Endothelial cell of umbilical vein (primary cell): ENCODE measurements at regions of chr2 and their contacts with region 1.

Region 1: DNA sequence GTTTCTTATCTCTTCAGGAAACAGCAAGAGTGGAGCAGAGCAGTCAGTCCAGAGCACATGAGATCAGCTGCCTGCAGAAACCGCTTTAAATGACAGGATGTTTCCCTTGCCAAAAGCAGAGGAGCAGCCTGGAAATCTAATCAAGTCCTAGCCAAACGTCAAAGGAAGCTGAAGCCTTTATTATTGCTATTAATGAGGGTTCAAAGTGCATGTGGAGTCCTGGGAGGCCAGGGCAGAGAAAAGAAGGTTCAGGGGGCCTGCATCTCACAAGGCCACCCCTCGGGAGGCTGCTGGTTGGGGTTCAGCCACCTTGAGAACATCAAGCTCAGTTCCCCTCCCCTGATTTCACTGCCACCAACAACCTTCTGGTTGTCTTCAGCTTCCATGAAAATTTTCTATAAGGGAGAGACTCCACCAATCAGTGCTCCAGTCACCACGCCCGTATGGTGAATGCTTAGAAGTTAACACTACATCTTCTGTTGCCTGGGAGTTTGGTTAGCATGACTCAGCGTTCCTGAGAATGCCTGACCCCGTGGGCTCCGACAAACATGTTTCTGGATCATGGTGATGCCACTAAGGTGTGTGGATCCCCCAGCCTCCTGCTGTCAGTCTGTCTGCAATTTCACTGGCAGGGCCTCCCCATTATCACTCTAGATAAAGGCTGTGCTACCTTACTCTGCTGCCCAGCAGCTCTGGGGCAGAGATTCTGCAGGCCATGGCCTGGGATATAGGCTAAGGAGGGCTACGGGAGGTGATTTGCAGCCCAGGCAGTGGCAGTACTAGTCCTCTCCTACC is 66.2 kb downstream of the STPG4 start:
- DNase-seq: peak; percentile 95
- H3K4me3 ChIP-seq: no peak overlapping the region
- H3K27ac ChIP-seq: peak overlapping the region; percentile 93
- H3K4me1 ChIP-seq: peaks cover 52% of the 10 kb centered on the region
- H3K27me3 ChIP-seq: no peaks in the 10 kb centered on the region
- CTCF ChIP-seq: no peak
- POLR2A ChIP-seq: peak; percentile 31

Region 2: GRCh38 chr2:47043142-47043890 is 45.5 kb before region 1 on chr2:
- CTCF ChIA-PET with region 1: interaction called, 12 read pairs
- POLR2A ChIA-PET with region 1: no interaction called
- dilution Hi-C with region 1: no loop called
- intact Hi-C with region 1: loop called (anchors 2 kb)
- DNase-seq: peak; percentile 82
- H3K4me3 ChIP-seq: no peak overlapping the region
- H3K27ac ChIP-seq: peak overlapping the region; percentile 97
- H3K4me1 ChIP-seq: peaks cover 28% of the 10 kb centered on the region
- H3K27me3 ChIP-seq: no peaks in the 10 kb centered on the region
- CTCF ChIP-seq: no peak
- POLR2A ChIP-seq: no peak

Region 3: DNA sequence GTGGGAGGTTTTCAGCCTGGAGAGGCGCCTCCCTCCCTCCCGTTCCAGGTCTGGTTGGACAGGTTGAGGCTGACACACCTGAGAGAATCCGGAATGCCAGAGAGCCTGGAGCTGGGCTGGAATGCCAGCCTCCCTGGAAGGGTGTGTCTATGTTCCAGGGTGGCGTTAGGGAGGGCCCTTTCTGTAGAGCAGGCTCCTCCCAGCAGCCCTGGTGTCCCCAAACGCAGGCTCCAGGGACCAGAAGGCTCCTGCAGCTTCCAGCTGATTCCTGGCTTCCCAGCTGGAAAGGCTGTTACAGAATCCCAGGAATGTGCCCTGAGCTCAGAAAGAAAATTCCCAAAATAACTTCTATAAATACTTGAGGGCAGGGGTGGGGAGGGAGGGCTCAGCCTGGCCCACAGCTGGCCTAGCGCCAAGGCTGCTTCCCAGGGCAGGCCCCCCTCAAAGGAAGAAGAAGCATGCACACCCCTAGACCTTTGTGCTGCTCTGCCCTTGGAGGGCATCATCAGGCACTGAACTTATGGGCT is 19.2 kb before region 1 on chr2:
- CTCF ChIA-PET with region 1: interaction called, 10 read pairs
- POLR2A ChIA-PET with region 1: interaction called, 3 read pairs
- dilution Hi-C with region 1: no loop called
- intact Hi-C with region 1: loop called (anchors 1 kb)
- DNase-seq: peak; percentile 34
- H3K4me3 ChIP-seq: no peak overlapping the region
- H3K27ac ChIP-seq: peak overlapping the region; percentile 48
- H3K4me1 ChIP-seq: peaks cover 46% of the 10 kb centered on the region
- H3K27me3 ChIP-seq: no peaks in the 10 kb centered on the region
- CTCF ChIP-seq: no peak
- POLR2A ChIP-seq: no peak

Region 4: GRCh38 chr2:47076586-47077441 is 12.1 kb before region 1 on chr2:
- CTCF ChIA-PET with region 1: interaction called, 12 read pairs
- POLR2A ChIA-PET with region 1: interaction called, 4 read pairs
- dilution Hi-C with region 1: no loop called
- intact Hi-C with region 1: loop called (anchors 1 kb)
- DNase-seq: peak; percentile 76
- H3K4me3 ChIP-seq: no peak overlapping the region
- H3K27ac ChIP-seq: peak overlapping the region; percentile 89
- H3K4me1 ChIP-seq: peaks cover 26% of the 10 kb centered on the region
- H3K27me3 ChIP-seq: no peaks in the 10 kb centered on the region
- CTCF ChIP-seq: no peak
- POLR2A ChIP-seq: no peak

Region 5: GRCh38 chr2:47174733-47175361 is 86.0 kb after region 1 on chr2:
- CTCF ChIA-PET with region 1: interaction called, 3 read pairs
- POLR2A ChIA-PET with region 1: no interaction called
- dilution Hi-C with region 1: no loop called
- intact Hi-C with region 1: loop called (anchors 5 kb)
- DNase-seq: peak; percentile 56
- H3K4me3 ChIP-seq: peak overlapping the region; percentile 68 to 91 (median 90)
- H3K27ac ChIP-seq: peak overlapping the region; percentile 100
- H3K4me1 ChIP-seq: peaks cover 41% of the 10 kb centered on the region
- H3K27me3 ChIP-seq: no peaks in the 10 kb centered on the region
- CTCF ChIP-seq: no peak
- POLR2A ChIP-seq: peak; percentile 22

Region 6: GRCh38 chr2:47272031-47272864 is 183.4 kb after region 1 on chr2:
- CTCF ChIA-PET with region 1: interaction called, 4 read pairs
- POLR2A ChIA-PET with region 1: no interaction called
- dilution Hi-C with region 1: no loop called
- intact Hi-C with region 1: loop called (anchors 1 kb)
- DNase-seq: peak; percentile 46
- H3K4me3 ChIP-seq: peak overlapping the region in 2 of 3 experiments; percentile 11 to 33
- H3K27ac ChIP-seq: peak overlapping the region; percentile 34
- H3K4me1 ChIP-seq: peaks cover 23% of the 10 kb centered on the region
- H3K27me3 ChIP-seq: no peaks in the 10 kb centered on the region
- CTCF ChIP-seq: peak; percentile 96 to 99
- POLR2A ChIP-seq: no peak

Region 7: DNA sequence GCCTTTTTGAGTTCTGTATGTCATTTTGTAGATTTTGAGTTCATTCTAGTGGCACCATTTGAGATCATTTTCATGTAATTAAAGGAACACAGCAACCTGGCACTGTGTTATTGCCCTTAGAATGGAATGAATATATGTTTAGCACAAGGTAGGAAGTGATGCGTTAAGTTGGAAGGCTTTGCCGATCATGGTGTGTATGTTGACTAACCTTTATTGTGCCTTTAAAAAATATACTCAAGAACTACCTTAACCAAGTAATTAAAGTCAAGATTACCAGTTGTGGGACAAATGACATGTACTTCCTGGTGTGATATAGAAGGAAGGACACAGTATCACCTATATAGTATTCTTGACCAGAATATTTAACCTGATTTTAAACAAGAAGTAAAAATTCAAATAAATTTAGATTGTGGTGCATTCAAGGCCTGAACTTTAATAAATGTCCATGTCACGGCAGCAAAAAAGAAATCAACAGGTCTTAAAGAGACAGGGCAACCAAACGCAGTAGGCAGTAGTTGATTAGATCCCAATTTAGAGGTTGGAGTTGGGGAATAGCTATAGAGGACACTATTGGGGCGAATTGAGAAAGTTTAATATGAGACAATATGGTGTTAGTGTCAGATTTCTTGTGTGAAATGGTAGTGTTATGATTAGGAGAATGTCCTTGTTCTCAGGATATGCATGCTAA is 382.7 kb after region 1 on chr2:
- CTCF ChIA-PET with region 1: no interaction called
- POLR2A ChIA-PET with region 1: no interaction called
- dilution Hi-C with region 1: no loop called
- intact Hi-C with region 1: no loop called
- DNase-seq: no peak
- H3K4me3 ChIP-seq: no peak overlapping the region
- H3K27ac ChIP-seq: no peak overlapping the region
- H3K4me1 ChIP-seq: no peaks in the 10 kb centered on the region
- H3K27me3 ChIP-seq: no peaks in the 10 kb centered on the region
- CTCF ChIP-seq: no peak
- POLR2A ChIP-seq: no peak

Region 8: DNA sequence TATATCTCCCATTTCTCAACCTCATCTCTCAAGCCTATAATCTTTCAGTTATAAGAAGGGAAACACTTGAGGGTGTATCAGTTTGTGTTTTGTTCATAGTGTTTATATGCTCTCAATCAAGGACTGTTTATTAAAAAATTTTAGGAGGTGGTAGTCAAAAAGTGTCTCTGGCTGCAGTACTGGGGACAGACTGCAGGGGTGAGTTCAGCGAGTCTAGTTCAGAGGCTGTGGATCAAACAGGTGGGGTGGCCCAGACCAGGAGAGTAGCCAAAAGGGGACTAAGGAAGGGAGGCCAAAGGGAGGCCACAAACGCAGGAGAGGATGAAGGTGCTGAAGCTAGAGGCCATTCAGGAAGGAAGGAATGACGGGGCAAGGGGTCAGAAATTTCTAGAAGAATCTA is 450.4 kb after region 1 on chr2:
- CTCF ChIA-PET with region 1: no interaction called
- POLR2A ChIA-PET with region 1: no interaction called
- dilution Hi-C with region 1: no loop called
- intact Hi-C with region 1: no loop called
- DNase-seq: no peak
- H3K4me3 ChIP-seq: no peak overlapping the region
- H3K27ac ChIP-seq: no peak overlapping the region
- H3K4me1 ChIP-seq: peaks cover 17% of the 10 kb centered on the region
- H3K27me3 ChIP-seq: no peaks in the 10 kb centered on the region
- CTCF ChIP-seq: peak in 1 of 2 donors; percentile 7
- POLR2A ChIP-seq: no peak

Region 9: DNA sequence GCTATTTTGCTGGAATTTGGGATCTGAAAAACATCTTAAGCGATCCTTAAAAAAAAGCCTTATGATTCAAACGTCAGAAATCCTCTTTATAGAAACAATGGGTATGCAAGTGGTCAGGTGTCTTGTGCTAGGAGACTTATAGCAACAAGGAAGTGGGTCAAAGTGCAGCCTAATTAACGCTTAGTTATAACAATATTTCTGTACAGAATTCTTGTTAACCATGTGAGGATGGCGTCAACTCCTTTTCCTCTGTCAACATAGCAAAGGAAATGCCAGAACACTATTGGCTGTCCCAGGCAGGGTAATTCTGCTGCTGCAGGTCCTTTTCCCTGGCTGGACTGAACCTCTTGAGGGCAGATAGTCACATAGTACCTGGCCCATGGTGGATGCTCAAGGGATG is 503.5 kb after region 1 on chr2:
- CTCF ChIA-PET with region 1: no interaction called
- POLR2A ChIA-PET with region 1: no interaction called
- dilution Hi-C with region 1: no loop called
- intact Hi-C with region 1: no loop called
- DNase-seq: peak; percentile 59
- H3K4me3 ChIP-seq: no peak overlapping the region
- H3K27ac ChIP-seq: no peak overlapping the region
- H3K4me1 ChIP-seq: no peaks in the 10 kb centered on the region
- H3K27me3 ChIP-seq: peaks cover 3 to 6% of the 10 kb centered on the region in 2 experiments
- CTCF ChIP-seq: no peak
- POLR2A ChIP-seq: no peak

Region 10: DNA sequence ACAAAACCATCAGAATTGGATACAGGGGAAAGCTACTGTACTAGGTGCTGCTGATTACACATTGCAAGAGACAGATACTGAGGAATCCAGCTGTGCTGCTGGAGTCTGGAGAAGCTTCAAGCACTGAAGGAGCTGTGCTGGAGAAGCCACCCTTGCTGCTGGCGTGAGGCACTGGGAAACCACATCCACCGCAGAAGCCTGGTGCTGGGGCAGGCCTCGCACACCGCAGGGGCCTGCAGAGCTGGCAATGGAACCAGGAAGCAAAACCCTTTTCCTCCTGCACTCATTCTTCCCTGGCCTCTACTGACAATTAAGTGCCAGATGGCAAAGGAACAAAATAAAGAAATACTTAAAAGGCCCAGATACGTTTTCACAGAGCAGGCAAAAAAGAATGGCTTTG is 599.7 kb after region 1 on chr2:
- CTCF ChIA-PET with region 1: no interaction called
- POLR2A ChIA-PET with region 1: no interaction called
- dilution Hi-C with region 1: no loop called
- intact Hi-C with region 1: no loop called
- DNase-seq: no peak
- H3K4me3 ChIP-seq: no peak overlapping the region
- H3K27ac ChIP-seq: peak overlapping the region; percentile 30
- H3K4me1 ChIP-seq: peaks cover 14% of the 10 kb centered on the region
- H3K27me3 ChIP-seq: no peaks in the 10 kb centered on the region
- CTCF ChIP-seq: no peak
- POLR2A ChIP-seq: no peak